ENCODE measurements at regions of chr3 and their contacts with region 1.

Region 1: DNA sequence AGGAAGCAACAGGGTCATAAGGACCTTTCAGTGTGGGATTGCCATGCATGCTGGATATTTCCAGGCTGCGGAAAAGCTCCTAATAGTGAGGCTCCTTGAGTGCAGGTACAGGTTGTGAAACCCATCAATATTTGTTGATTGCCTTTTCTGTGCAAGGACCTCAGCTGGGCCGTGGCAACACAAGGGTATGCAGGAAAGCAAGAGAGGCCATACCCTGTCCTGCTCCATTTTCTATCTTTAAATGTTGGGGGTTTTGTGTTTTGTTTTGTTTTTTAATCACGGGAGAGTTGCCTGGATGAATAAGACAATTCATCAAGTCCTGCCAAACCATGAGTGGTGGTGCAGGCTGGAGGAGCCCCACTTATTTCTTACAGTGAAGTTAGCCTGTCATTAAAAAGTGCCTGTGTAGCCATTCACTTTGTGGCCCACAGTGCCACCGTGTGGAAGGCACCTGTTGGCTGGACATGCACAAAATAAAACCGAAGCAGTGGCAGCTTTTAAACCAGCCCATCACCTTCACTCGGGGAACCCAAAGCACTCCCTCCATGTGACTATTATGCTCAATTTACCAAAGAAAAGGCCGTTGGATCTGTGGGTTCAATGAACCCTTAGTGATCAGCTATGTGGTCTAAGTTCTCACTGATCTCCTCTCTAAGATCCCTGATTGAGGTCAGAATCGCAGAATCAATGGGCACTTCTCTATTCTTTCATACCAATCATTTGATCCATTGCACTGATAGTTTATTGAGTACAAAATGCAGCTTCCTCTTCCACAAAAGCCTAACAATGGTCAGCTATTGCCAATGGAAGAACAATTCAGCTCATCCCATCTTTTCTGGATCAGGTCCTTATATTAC is 42.2 kb downstream of the CLDN18 start:
- DNase-seq: peak; percentile 47
- CTCF ChIP-seq: peak; percentile 82

Region 2: GRCh38 chr3:137121704-137122314 is 930.4 kb before region 1 on chr3:
- in situ Hi-C with region 1: loop called (anchors 10 kb)
- DNase-seq: peak; percentile 56
- CTCF ChIP-seq: peak; percentile 70

Region 3: GRCh38 chr3:138381950-138382688 is 329.9 kb after region 1 on chr3:
- in situ Hi-C with region 1: no loop called
- DNase-seq: no peak
- CTCF ChIP-seq: no peak

Measured in GM13976 (cell line).